SK-N-SH (cell line): ENCODE measurements at regions of chr3 and their contacts with region 1.

Region 1: DNA sequence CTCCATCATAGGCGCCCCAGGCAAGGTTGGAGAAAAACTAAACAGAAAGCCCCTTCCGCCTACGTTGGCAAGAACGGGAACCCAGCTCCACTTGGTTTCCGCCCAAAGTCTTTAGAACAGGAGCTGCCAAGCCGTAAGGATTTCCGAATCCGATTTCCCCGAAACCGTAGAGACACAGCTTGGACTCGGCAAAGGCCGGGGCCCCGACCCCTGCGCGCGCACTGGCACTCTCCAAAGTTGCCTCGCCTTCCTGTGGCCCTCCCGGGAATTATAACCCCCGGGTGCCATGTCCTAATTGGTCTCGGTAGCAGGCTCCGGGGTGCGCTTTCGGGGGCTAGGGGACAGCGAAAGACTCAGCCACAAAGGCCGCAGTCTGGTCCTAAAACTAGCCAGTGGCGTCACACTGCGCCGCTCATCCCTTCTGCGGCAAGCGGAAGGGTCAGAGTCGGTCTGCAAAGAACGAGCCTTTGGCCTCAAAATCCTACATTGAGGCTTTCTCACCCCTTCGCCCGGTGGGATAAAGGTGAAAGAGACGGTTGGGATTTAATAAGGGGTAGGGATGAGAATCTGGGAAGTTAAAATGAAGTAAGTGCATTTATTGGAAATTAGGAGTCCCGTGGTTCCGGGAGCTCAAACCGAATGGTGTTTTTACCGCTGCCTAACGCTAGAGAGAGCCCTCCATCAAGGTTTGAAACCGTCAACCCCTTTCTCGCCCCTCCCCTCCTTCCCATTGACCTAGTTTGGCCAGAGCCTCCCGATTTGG is 6.8 kb downstream of the BCL6 start:
- DNase-seq: peak; percentile 87
- H3K4me3 ChIP-seq: peak overlapping the region; percentile 51 to 94
- H3K27ac ChIP-seq: peak overlapping the region; percentile 50 to 97; a peak in 3 of 4 replicates
- H3K4me1 ChIP-seq: peaks cover 31 to 32% of the 10 kb centered on the region in 2 experiments; a peak in 3 of 4 replicates
- H3K27me3 ChIP-seq: no peaks in the 10 kb centered on the region
- CTCF ChIP-seq: peak; percentile 83
- EP300 ChIP-seq: 0 out of 4 replicates have a peak, but pooled peaks of 1 of the 2 experiments have one; percentile 5
- RAD21 ChIP-seq: peak; percentile 88

Region 2: GRCh38 chr3:187714404-187714979 is 24.0 kb before region 1 on chr3:
- CTCF ChIA-PET with region 1: interaction called, 53 read pairs
- POLR2A ChIA-PET with region 1: no interaction called
- DNase-seq: peak; percentile 65
- H3K4me3 ChIP-seq: peak overlapping the region in 1 of 2 experiments; percentile 2; a peak in 1 of 4 replicates
- H3K27ac ChIP-seq: no peak overlapping the region
- H3K4me1 ChIP-seq: no peaks in the 10 kb centered on the region
- H3K27me3 ChIP-seq: no peaks in the 10 kb centered on the region; the same call in 1 of the 2 replicates
- CTCF ChIP-seq: peak; percentile 91
- EP300 ChIP-seq: no peak
- RAD21 ChIP-seq: peak; percentile 88

Region 3: DNA sequence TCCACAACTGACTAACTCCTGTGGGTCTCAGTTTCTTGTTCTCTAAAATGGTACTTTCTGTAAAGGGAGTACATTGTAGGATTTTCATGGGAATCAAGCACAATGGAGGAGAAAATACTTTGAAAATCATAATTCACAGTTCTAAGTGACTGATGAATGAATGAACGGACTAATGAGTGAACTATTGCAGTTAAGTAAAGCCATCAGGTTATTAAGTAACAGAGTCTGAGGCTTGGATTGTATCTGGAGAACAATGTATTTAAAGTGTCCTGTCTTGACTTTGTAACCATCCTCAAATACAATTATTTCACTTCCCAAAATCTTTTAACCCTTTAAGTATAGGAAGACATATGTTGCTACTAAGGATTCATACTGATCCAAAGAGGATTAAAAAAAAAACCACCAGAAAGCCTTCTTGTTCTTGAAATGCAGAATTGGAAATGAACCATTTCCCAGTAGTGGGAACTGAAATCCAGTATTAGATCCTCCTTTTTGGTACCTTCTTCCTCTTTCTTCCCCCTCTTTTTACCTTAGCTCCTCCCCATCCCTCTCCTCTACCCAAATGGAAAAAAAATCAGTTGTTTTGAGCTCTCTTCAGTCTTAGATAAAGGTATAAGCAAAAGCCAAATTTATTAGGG is 19.9 kb after region 1 on chr3:
- CTCF ChIA-PET with region 1: interaction called, 14 read pairs
- POLR2A ChIA-PET with region 1: no interaction called
- DNase-seq: no peak
- H3K4me3 ChIP-seq: no peak overlapping the region
- H3K27ac ChIP-seq: no peak overlapping the region
- H3K4me1 ChIP-seq: no peaks in the 10 kb centered on the region
- H3K27me3 ChIP-seq: no peaks in the 10 kb centered on the region
- CTCF ChIP-seq: no peak
- EP300 ChIP-seq: no peak
- RAD21 ChIP-seq: no peak

Region 4: GRCh38 chr3:188947401-188948280 is 1209.1 kb after region 1 on chr3:
- CTCF ChIA-PET with region 1: interaction called, 71 read pairs
- POLR2A ChIA-PET with region 1: no interaction called
- DNase-seq: peak; percentile 86
- H3K4me3 ChIP-seq: peak overlapping the region; percentile 51 to 61
- H3K27ac ChIP-seq: peak overlapping the region; percentile 85 to 93
- H3K4me1 ChIP-seq: peaks cover 24 to 30% of the 10 kb centered on the region in 2 experiments; a peak in 3 of 4 replicates
- H3K27me3 ChIP-seq: no peaks in the 10 kb centered on the region
- CTCF ChIP-seq: peak; percentile 56
- EP300 ChIP-seq: peak; percentile 36 to 60; a peak in 2 of 4 replicates
- RAD21 ChIP-seq: peak; percentile 61

Region 5: GRCh38 chr3:189148081-189148507 is 1409.6 kb after region 1 on chr3:
- CTCF ChIA-PET with region 1: interaction called, 137 read pairs
- POLR2A ChIA-PET with region 1: no interaction called
- DNase-seq: peak; percentile 52
- H3K4me3 ChIP-seq: no peak overlapping the region; a peak in 1 of 4 replicates
- H3K27ac ChIP-seq: no peak overlapping the region
- H3K4me1 ChIP-seq: peaks cover 0 to 3% of the 10 kb centered on the region in 2 experiments; a peak in 1 of 4 replicates
- H3K27me3 ChIP-seq: no peaks in the 10 kb centered on the region; the same call in 1 of the 2 replicates
- CTCF ChIP-seq: peak; percentile 83
- EP300 ChIP-seq: no peak
- RAD21 ChIP-seq: peak; percentile 95

Region 6: DNA sequence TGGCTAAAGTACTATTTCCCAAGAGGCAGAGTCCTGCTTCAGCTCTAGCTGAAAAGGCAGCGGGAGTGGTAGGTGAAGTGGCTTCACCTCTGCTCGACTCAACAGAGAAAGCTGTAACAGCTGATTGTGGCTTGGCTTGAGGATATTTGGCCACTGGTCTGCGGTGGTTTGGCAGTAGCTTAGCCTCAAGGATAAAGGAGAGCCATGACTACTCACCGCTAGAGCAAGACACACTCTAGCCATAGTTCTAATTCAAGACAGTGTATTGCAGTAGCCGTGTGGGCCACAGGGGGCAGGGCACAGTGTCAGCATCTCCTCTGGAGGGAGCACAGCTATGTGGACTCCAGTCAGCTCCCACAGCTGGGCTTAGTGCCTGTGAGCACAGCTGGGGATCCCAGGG is 1456.8 kb after region 1 on chr3:
- CTCF ChIA-PET with region 1: interaction called, 12 read pairs
- POLR2A ChIA-PET with region 1: no interaction called
- DNase-seq: no peak
- H3K4me3 ChIP-seq: no peak overlapping the region
- H3K27ac ChIP-seq: no peak overlapping the region
- H3K4me1 ChIP-seq: no peaks in the 10 kb centered on the region
- H3K27me3 ChIP-seq: no peaks in the 10 kb centered on the region; the same call in 1 of the 2 replicates
- CTCF ChIP-seq: peak; percentile 37; the same call in 1 of the 2 replicates
- EP300 ChIP-seq: no peak
- RAD21 ChIP-seq: no peak